Tibial artery (tissue), 4 donors: ENCODE measurements at regions of chr18 and their contacts with region 1.

Region 1: GRCh38 chr18:34592961-34593382 is 117.1 kb upstream of the DTNA start:
- DNase-seq: peak; percentile 39 to 78
- H3K4me3 ChIP-seq: peak overlapping the region; percentile 51 to 55
- H3K27ac ChIP-seq: peak overlapping the region; percentile 62 to 78
- H3K4me1 ChIP-seq: peaks cover 0 to 60% (median 23%) of the 10 kb centered on the region in 4 donors
- H3K27me3 ChIP-seq: no peaks in the 10 kb centered on the region
- CTCF ChIP-seq: no peak

Region 2: DNA sequence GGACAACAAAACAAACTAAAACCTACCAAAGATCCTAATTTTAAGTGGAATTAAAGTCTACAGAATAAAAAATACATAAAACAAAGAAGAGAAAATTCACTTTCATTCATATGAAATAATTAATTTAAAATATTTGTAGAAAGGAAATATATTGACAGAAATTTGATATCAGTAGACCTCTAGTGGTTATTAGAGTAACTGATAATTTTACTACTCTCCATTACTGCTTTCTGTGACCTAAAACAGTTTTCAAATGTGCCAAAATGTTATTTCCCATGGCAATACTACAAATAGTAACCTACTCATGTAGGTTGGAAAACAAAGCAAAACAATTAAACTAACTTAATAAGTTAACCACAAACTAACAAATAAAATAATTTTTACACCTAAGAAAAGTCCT is 515.4 kb before region 1 on chr18:
- intact Hi-C with region 1: no loop called
- DNase-seq: no peak
- H3K4me3 ChIP-seq: no peak overlapping the region
- H3K27ac ChIP-seq: no peak overlapping the region
- H3K4me1 ChIP-seq: no peaks in the 10 kb centered on the region
- H3K27me3 ChIP-seq: no peaks in the 10 kb centered on the region
- CTCF ChIP-seq: no peak

Region 3: DNA sequence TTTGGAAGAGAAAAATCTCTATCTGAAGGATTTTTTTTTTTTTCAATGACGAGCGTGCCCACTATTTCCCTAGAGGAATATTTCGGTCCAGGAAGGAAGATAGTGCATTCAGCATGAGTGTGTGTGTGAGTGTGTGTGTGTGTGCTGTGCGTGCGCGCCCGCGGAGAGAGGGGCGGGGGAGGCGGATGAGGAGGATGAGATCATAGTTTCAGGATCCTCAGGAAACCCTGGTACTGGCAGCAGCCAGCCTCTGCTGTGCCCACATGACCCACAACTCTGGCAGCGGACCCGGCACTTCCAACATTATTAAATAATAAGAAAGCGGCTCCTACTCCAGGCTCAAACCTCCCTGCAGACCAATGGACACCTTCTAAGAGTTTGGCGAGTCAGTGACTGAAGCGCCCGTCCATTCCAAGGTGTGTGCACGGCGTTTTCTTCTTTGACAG is 99.8 kb before region 1 on chr18:
- intact Hi-C with region 1: loop called (anchors 10 kb)
- DNase-seq: peak; percentile 77 to 92
- H3K4me3 ChIP-seq: peak overlapping the region; percentile 68 to 78
- H3K27ac ChIP-seq: peak overlapping the region; percentile 74 to 77
- H3K4me1 ChIP-seq: peaks cover 0 to 18% (median 3%) of the 10 kb centered on the region in 4 donors
- H3K27me3 ChIP-seq: no peaks in the 10 kb centered on the region
- CTCF ChIP-seq: no peak

Region 4: DNA sequence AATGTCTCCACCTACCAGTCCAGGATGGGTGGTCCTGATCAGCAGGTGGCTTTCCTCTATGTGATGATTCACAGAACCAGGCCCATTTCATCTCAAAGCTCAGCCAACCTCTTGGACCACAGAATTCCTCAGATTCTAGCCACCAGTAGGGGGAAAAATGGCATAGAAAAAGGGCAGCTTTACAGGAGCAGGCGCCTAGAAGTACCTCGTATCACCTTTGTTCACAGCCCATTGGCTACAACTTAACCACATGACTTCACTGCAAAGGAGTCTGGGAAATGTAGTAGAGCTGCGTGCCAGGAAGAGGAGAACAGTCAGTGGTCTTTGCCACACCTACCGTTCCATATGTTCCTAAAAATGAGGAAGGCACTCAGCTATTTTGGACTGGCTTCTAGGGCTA is 54.3 kb after region 1 on chr18:
- intact Hi-C with region 1: loop called (anchors 10 kb)
- DNase-seq: no peak
- H3K4me3 ChIP-seq: no peak overlapping the region
- H3K27ac ChIP-seq: peak overlapping the region; percentile 27 to 54
- H3K4me1 ChIP-seq: peaks cover 0 to 93% (median 29%) of the 10 kb centered on the region in 4 donors
- H3K27me3 ChIP-seq: no peaks in the 10 kb centered on the region
- CTCF ChIP-seq: no peak